ENCODE measurements at regions of chr1 and their contacts with region 1.

Region 1: DNA sequence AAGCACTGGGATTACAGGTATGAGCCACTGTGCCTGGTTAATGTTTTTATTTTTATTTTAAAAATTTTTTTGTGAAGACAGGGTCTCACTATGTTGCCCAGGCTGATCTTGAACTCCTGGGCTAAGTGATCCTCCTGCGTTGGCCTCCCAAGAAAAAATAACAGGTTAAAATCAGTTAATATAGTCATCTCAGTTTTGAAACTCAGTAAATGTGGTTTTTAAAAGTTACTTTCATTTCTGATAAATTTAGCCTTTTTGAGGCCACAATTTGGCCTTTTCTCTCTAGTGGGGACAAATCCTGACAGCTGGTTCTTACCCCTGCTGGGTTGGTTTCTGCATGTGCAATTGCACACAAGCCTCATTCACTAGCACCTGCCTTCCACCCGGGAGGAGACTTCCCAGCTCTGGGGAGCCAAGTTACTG is 13.3 kb downstream of the PMF1 start:
- DNase-seq: peak; percentile 75
- CTCF ChIP-seq: no peak

Region 2: GRCh38 chr1:156096640-156097391 is 129.3 kb before region 1 on chr1:
- CTCF ChIA-PET with region 1: interaction called, 35 read pairs
- POLR2A ChIA-PET with region 1: no interaction called
- DNase-seq: peak; percentile 84
- CTCF ChIP-seq: peak; percentile 86

Region 3: GRCh38 chr1:156165083-156165482 is 61.0 kb before region 1 on chr1:
- CTCF ChIA-PET with region 1: interaction called, 18 read pairs
- POLR2A ChIA-PET with region 1: no interaction called
- DNase-seq: peak; percentile 19
- CTCF ChIP-seq: no peak

Region 4: GRCh38 chr1:156212833-156213643 is 13.1 kb before region 1 on chr1 and contains the start of gene PMF1:
- CTCF ChIA-PET with region 1: interaction called, 63 read pairs
- POLR2A ChIA-PET with region 1: interaction called, 9 read pairs
- DNase-seq: peak; percentile 99
- CTCF ChIP-seq: no peak

Region 5: DNA sequence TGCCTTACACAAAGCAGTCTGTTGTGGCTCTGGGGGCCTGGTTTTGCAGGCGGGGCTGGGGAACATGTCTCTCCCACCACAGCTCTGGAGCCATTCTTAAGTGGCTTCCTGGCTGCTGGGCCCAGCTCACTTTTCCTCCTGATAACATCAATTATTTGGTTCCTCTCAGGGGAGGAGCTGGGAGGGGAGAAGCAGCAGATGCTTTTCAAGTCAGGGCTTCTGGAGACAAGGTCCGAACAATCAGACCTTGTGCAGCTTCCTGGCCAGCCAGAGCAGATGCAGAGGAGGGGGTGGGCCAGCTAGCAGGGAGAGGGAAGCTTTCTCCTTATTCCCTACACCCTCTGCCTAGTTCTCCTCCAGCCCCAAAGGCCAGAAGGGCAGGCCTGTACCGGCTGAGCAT is 25.4 kb after region 1 on chr1:
- CTCF ChIA-PET with region 1: interaction called, 34 read pairs
- POLR2A ChIA-PET with region 1: interaction called, 14 read pairs
- DNase-seq: no peak
- CTCF ChIP-seq: no peak

Region 6: DNA sequence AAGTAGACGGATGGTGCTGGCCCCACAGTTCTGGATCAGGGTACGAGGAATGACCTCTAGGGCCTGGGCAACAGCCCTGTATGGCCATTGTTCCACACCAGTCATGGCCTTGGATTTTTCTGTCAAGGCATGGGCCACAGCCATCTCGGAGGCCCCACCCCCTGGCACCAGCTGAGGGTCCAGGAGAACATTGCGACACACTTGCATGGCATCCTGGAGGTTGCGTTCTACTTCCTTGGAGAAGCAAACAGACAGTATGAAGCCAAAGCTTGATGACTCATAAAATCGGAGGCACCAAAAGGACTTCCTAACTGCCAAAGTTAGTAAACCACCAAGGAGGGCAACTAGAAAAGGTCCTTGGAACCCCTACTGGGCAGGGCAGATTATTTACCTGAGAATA is 84.8 kb after region 1 on chr1:
- CTCF ChIA-PET with region 1: no interaction called
- POLR2A ChIA-PET with region 1: no interaction called
- DNase-seq: peak; percentile 2
- CTCF ChIP-seq: no peak

Region 7: DNA sequence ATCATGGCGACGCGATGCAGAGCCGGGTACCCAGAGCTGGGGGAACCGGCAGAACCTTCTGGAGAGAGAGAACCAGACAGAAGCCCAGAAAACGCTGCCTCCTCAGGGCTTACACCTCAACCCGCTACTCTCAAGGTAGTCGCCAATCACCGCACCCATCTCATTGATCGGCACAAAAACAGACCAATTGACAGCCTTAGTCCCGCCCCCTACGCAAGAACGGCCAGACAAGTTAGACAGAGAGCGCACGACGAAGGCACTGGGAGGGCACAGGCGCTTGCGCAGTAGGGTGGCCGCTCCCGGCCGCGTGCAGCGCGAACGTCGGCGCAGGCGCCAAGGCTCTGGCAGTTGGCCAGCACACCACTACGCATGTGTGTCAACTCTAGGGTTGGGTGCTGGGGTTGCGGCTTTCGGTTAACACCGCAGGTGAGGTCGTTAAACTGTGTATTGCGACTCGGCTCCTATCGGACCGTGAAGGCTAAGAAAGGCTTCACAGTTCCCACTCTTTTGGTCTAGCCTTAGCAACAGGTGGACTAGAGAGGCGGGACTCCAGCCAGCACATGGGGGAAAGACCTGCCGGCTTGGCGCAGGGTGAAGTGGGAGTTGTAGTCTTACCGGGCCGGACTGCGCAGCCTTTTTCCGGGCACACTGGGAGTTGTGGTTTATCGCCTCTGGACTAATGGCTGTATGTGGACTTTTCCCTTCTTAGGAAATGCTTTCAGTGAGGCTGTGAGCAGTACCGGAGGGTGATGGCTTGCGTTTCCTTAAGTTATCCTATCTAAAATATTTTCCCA is 112.2 kb after region 1 on chr1 and contains the starts of genes CCT3 and TSACC:
- CTCF ChIA-PET with region 1: no interaction called
- POLR2A ChIA-PET with region 1: interaction called, 12 read pairs
- DNase-seq: peak; percentile 98
- CTCF ChIP-seq: no peak

Region 8: DNA sequence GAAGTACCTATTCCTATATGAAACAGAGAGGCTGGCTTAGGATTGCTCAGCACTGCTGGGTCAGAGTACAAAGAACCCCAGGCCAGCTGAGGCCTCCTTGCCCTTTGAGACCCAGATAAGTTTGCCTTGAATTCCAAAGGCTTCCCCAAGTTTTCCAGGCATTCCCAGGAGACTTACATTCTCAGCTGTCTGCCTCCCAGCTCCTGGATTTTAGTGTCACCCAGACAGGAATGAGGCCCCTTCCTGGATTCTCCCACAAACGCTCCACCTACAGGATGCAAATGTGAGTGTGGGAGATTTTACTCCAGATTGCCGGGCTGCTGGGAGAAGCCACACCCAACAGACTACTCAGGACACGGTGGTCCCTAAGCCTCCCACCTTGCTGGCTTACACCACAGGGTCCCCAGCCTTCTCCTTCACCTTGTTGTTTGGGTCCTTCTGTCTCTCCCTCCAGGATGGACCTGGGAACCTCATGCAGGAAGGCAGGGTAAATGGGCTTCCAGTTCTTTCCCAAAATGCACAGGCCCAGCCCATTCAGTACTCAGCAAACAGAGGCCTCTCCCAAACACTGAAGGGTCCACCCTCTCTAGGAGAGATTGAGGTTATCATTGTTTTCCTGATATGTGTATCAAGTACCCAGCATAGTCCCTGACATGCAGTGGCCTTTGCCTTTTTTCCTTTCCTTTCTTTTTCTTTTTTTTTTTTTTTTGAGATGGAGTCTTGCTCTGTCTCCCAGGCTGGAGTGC is 153.5 kb after region 1 on chr1:
- CTCF ChIA-PET with region 1: no interaction called
- POLR2A ChIA-PET with region 1: no interaction called
- DNase-seq: no peak
- CTCF ChIP-seq: no peak

Region 9: DNA sequence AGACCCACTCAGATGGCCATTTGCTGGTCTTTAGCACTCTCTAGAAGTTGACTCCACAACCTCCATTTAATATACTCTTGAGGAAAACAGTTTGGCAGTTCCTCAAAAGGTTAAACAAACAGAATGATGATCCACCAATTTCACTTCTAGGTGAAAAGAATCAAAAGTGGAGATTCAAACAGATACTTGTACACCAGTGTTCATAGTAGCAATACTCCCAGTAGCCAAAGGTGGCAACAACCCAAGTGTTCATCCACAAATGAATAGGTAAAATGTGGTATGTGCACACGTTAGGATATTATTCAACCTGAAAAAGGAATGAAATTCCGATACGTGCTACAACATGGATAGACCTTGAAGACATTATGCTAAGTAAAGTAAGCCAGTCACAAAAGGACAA is 547.5 kb after region 1 on chr1:
- CTCF ChIA-PET with region 1: no interaction called
- POLR2A ChIA-PET with region 1: no interaction called
- DNase-seq: no peak
- CTCF ChIP-seq: no peak